ENCODE measurements at regions of chr12 and their contacts with region 1.

Region 1: DNA sequence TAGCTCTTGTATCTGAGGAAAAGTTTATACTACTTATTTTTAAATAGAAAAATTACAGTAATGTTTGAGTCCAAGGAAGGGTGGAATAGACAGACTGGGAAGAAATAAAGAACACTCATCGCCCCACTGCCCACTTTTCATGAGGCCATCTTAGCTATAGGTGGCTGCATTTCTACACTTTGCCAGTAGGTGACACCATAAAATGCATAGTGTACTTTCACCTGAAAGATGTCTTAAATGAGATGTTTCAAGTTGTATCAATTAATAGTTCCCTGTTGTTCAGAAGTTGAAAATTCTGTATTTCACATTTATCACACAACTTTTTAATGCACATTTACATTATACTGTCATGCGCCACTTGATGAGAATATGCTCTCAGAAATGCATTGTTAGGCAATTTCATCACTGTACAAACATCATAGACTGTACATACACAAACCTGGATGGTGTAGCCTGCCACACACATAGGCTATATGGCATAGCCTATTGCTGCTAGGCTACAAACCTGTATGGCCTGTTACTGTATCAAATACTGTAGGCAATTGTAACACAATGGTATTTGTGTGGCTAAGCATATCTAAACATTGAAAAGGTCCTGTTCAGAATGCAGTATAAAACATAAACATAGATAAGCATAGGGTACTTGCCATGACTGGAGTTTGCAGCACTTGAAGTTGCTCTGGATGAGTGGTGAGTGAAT is 27.6 kb downstream of the PMCH start:
- DNase-seq: peak; percentile 3
- H3K4me3 ChIP-seq: no peak overlapping the region
- H3K27ac ChIP-seq: no peak overlapping the region
- H3K4me1 ChIP-seq: no peaks in the 10 kb centered on the region
- H3K27me3 ChIP-seq: no peaks in the 10 kb centered on the region
- CTCF ChIP-seq: peak; percentile 38 to 78 (median 64)
- POLR2A ChIP-seq: no peak

Region 2: GRCh38 chr12:102484428-102484958 is 314.4 kb after region 1 on chr12:
- intact Hi-C with region 1: loop called (anchors 10 kb)
- DNase-seq: peak; percentile 55 to 59
- H3K4me3 ChIP-seq: no peak overlapping the region
- H3K27ac ChIP-seq: peak overlapping the region in 2 of 3 donors; percentile 43 to 46
- H3K4me1 ChIP-seq: peaks cover 13 to 34% of the 10 kb centered on the region in 2 donors
- H3K27me3 ChIP-seq: no peaks in the 10 kb centered on the region
- CTCF ChIP-seq: peak; percentile 67 to 94 (median 86)
- POLR2A ChIP-seq: no peak

Region 3: DNA sequence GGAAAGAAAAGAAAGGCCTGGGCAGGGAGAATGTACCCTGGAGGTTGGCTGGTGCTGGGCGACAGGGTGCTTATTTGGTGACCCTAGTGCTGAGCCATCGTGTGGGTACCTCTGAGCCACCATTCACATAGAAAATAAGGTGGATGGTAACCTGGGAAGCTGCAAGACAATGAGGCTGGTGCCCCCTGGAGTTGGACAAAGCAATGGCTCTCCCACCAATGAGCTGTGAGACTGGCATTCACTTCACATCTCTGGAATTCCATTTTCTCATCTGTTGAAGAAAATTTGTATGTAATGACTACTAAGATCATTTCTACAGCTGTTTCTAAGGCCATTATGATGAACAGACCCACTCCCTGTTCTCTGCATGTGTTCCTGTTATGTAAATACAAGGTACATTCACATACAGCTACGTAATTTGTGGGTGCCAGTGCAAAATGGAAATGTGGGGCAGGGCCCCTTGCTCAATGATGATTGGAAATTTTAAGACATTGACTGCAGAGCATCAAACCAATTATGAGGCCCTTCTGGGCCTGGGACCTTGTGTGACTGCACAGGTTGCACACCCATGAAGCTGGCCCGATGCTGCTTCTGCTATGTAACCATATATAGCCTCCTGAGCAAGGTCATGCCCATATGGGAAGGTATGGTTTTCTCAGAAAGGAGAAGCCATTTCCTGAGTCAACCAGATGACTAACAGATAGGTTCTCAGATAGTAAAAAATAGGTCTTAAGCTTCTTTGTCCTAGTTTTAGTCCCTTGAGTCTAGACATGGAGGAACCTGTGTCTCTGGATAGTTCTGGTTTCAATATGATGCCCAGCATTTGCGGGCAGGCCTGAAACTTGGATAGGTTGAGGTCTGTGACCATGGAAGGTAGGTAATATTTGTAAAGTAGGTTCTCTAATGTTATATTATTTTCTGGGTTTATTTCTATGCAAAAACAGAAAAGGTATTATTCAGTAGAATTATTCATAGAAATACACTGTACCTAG is 373.7 kb after region 1 on chr12:
- intact Hi-C with region 1: loop called (anchors 10 kb)
- DNase-seq: peak; percentile 34 to 37
- H3K4me3 ChIP-seq: no peak overlapping the region
- H3K27ac ChIP-seq: no peak overlapping the region
- H3K4me1 ChIP-seq: no peaks in the 10 kb centered on the region
- H3K27me3 ChIP-seq: no peaks in the 10 kb centered on the region
- CTCF ChIP-seq: peak in 5 of 6 experiments; percentile 23 to 55 (median 45)
- POLR2A ChIP-seq: no peak

Measured in thyroid gland (tissue), 4 donors.